Panc1 (cell line): ENCODE measurements at regions of chr3 and their contacts with region 1.

Region 1: DNA sequence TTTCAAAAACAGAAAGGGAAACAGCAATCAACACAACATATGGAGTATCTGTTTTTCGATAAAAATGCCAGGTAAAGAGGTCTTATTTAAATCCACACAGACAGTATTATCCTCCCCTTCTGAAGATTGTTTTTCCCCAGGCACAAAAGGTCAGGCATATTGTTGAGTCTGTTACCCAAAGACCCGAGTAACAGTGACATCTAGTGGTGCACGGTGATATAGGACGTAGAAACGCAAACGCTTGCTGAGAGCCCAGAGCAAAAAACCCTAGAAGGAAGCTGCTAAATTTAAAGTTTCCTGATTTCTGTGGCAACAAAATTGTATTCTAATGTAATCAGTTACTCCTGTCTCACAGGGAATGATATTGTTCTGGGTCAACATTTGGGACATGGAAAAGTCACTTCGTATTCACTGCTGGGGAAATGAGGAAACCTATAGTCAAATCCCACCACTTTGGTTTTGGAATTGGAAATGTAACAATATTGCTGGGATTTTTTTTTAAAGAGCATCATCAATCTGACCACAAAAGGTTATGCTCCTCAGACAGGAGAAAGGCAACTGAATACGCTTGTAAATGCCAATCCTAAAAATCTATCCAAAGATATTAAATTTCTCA is 312.7 kb upstream of the CCDC54 start:
- DNase-seq: peak; percentile 66
- ATAC-seq: peak; percentile 84
- H3K4me3 ChIP-seq: no peak overlapping the region
- H3K27ac ChIP-seq: no peak overlapping the region
- H3K4me1 ChIP-seq: no peaks in the 10 kb centered on the region
- H3K27me3 ChIP-seq: no peaks in the 10 kb centered on the region
- CTCF ChIP-seq: peak; percentile 88

Region 2: DNA sequence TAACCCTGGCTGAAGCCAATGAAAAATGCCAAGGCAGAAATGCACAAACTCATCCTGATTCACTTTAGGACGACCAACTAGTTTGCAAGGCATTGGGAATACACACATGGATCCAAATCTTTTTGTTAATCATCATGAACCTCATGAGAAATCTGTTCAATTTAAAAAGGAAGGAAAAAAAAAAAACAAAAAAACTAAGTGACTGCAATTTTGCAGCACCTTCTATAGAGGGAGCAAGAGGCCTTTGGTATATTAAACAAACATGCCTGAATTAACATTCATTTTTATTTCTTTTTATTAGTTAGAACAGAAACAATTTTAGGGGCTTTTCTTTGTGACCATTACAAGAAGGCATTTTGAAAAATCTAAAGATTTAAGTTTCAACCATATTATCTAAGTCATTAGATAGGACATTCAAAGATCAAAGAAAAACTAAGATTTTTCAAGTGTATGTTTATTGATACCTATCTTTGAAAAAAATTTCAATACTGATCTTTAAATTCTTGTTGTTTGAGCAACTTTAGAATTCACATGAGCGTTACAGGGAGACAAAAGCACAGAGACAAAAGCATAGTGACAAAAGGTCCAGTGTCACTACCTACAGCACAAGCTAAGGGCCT is 1378.2 kb before region 1 on chr3:
- CTCF ChIA-PET with region 1: no interaction called
- POLR2A ChIA-PET with region 1: no interaction called
- in situ Hi-C with region 1: no loop called
- intact Hi-C with region 1: loop called (anchors 10 kb)
- DNase-seq: no peak
- ATAC-seq: no peak
- H3K4me3 ChIP-seq: no peak overlapping the region
- H3K27ac ChIP-seq: no peak overlapping the region
- H3K4me1 ChIP-seq: no peaks in the 10 kb centered on the region
- H3K27me3 ChIP-seq: no peaks in the 10 kb centered on the region
- CTCF ChIP-seq: peak; percentile 77; the same call in 1 of the 2 replicates

Region 3: DNA sequence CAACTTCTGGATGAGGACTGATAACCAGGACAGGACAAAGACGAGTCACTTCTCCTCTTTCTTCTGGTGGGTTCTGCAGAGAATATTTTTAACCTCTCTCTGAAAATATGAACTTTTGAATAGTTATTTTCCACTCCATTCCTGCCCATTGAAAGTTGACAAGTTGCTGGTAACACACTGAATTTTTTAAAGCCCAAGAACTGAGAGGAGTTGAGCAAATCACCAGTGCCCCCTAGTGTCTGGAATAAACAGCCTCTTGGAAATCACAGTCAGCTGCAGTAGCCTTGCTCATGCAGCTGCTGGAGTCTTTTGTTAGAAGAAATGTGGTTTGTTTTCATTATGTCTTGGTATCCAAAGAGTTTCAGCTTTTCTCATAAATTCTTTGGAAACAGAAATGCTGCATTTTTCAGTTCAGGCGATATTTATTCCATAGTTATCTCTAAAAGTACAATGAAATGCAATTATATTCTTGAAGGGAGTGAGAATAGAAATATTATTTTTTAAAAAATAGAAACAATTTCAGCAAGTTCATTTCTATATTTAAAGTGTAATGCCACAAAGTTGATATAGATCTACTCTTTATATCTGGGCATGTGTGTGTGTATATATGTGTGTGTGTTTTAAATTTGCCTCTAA is 454.8 kb before region 1 on chr3:
- CTCF ChIA-PET with region 1: no interaction called
- POLR2A ChIA-PET with region 1: no interaction called
- in situ Hi-C with region 1: no loop called
- intact Hi-C with region 1: loop called (anchors 10 kb)
- DNase-seq: peak; percentile 60
- ATAC-seq: peak; percentile 81; the same call in 1 of the 2 replicates
- H3K4me3 ChIP-seq: no peak overlapping the region
- H3K27ac ChIP-seq: no peak overlapping the region
- H3K4me1 ChIP-seq: no peaks in the 10 kb centered on the region
- H3K27me3 ChIP-seq: no peaks in the 10 kb centered on the region
- CTCF ChIP-seq: peak; percentile 88

Region 4: GRCh38 chr3:106797461-106797860 is 267.1 kb before region 1 on chr3:
- CTCF ChIA-PET with region 1: no interaction called
- POLR2A ChIA-PET with region 1: no interaction called
- in situ Hi-C with region 1: no loop called
- intact Hi-C with region 1: no loop called
- DNase-seq: no peak
- ATAC-seq: no peak
- H3K4me3 ChIP-seq: no peak overlapping the region
- H3K27ac ChIP-seq: no peak overlapping the region
- H3K4me1 ChIP-seq: no peaks in the 10 kb centered on the region
- H3K27me3 ChIP-seq: no peaks in the 10 kb centered on the region
- CTCF ChIP-seq: no peak

Region 5: GRCh38 chr3:106824856-106825255 is 239.7 kb before region 1 on chr3:
- CTCF ChIA-PET with region 1: no interaction called
- POLR2A ChIA-PET with region 1: no interaction called
- in situ Hi-C with region 1: no loop called
- intact Hi-C with region 1: loop called (anchors 2 kb)
- DNase-seq: peak; percentile 13
- ATAC-seq: no peak
- H3K4me3 ChIP-seq: no peak overlapping the region
- H3K27ac ChIP-seq: no peak overlapping the region
- H3K4me1 ChIP-seq: no peaks in the 10 kb centered on the region
- H3K27me3 ChIP-seq: no peaks in the 10 kb centered on the region
- CTCF ChIP-seq: peak; percentile 34